CD8-positive, alpha-beta memory T cell (primary cell): ENCODE measurements at regions of chr16 and their contacts with region 1.

Region 1: DNA sequence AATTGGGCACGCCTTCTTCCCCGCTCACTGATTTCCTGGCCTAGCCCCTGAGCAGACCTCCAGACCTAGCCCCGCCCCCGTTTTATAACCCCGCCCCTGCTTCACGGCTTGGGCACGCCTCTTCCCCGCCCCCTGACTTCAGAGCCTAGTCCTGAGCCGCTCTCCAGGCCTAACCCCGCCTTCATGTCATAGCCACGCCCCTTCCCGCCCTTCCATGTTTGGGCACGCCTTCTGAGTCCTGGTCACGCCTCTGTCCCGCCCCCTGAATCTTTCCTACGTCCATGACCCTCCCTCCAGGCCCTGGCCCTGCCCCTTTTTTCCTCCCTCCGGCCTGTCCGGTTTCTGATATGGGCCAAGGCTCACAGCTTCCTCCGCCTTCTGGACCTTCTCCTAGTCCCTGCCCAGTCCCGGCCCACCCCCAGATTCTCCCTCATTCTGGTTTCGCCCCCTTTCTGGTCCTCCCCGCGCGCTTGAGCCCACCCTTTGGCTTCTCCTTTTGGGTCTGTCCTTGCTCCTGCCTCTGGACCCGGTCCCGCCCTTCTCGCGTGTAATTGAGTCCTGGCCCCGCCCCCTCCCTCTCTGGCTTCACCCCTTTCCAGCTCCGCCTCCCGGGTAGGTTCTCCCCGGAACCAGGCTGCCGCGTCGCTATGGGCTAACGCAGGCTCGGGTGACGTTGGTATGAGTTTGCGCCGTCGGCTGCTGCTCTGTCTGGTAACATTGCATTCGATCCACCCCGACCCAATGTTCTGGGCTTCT is 15.1 kb upstream of the EEF2K start:
- DNase-seq: peak; percentile 98 to 100 (median 99)
- H3K4me3 ChIP-seq: peak overlapping the region; percentile 86
- H3K4me3 Mint-ChIP-seq: peak overlapping the region; percentile 87 to 97 (median 94)
- H3K27ac ChIP-seq: peak overlapping the region; percentile 99
- H3K27ac Mint-ChIP-seq: peak overlapping the region; percentile 98 to 100 (median 99)
- H3K4me1 ChIP-seq: peaks cover 70% of the 10 kb centered on the region
- H3K4me1 Mint-ChIP-seq: peaks cover 59 to 82% (median 69%) of the 10 kb centered on the region in 3 donors
- H3K27me3 ChIP-seq: no peaks in the 10 kb centered on the region
- H3K27me3 Mint-ChIP-seq: peaks cover 0 to 17% of the 10 kb centered on the region in 2 donors

Region 2: GRCh38 chr16:22001591-22001990 is 189.4 kb before region 1 on chr16:
- CTCF ChIA-PET with region 1: interaction called, 115 read pairs
- POLR2A ChIA-PET with region 1: interaction called, 19 read pairs
- DNase-seq: no peak
- H3K4me3 ChIP-seq: no peak overlapping the region
- H3K4me3 Mint-ChIP-seq: peak overlapping the region in 4 of 7 donors; percentile 15 to 59 (median 42)
- H3K27ac ChIP-seq: no peak overlapping the region
- H3K27ac Mint-ChIP-seq: peak overlapping the region in 2 of 8 donors; percentile 66 to 90
- H3K4me1 ChIP-seq: peaks cover 8% of the 10 kb centered on the region
- H3K4me1 Mint-ChIP-seq: peaks cover 11 to 15% (median 15%) of the 10 kb centered on the region in 3 donors
- H3K27me3 ChIP-seq: no peaks in the 10 kb centered on the region
- H3K27me3 Mint-ChIP-seq: no peaks in the 10 kb centered on the region

Region 3: DNA sequence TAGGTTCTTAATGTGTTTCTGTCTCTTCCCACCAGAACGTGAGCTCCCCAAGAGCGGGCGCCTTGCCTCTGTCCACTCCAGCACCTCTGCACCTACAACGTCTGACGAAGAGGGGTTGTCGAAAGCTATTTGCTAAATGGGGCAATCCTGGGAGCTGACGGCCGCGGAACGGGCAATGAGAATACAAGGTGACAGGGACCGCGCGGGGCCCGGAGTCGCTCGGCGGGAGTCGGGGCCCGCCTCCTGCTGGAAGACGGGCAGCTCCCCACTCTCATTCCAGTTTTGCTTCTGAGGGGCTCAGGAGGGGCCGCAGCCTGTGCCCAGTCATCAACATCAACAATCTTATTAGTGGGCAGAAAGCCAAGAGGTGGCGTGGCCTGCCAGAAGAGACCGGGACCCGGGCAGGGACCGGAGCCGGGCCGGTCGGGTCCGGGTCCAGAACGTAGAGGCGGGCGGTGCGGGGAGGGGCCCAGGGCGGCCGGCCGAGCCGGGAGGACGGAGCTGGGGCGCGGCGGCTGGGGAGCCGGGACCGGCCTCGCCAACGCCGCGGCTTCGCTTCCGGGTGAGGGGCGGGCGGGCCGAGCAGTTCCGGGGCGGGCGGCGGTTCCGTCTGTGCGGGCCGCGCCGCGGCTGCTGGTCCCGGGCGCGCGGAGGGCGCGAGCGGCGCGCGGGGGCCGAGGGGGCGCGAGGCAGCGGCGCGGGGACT is 183.3 kb before region 1 on chr16 and contains the start of gene MOSMO:
- CTCF ChIA-PET with region 1: interaction called, 115 read pairs
- POLR2A ChIA-PET with region 1: interaction called, 24 read pairs
- DNase-seq: peak; percentile 59 to 71 (median 63)
- H3K4me3 ChIP-seq: peak within 1 kb of the TSS; percentile 36
- H3K4me3 Mint-ChIP-seq: peak within 1 kb of the TSS; percentile 85 to 96 (median 88)
- H3K27ac ChIP-seq: peak within 1 kb of the TSS; percentile 49
- H3K27ac Mint-ChIP-seq: peak within 1 kb of the TSS; percentile 62 to 96 (median 88)
- H3K4me1 ChIP-seq: peaks cover 15% of the 10 kb centered on the region
- H3K4me1 Mint-ChIP-seq: peaks cover 42 to 54% (median 54%) of the 10 kb centered on the region in 3 donors
- H3K27me3 ChIP-seq: no peaks in the 10 kb centered on the region
- H3K27me3 Mint-ChIP-seq: no peaks in the 10 kb centered on the region
- total RNA-seq, gene MOSMO: 9.2 to 11.4 TPM

Region 4: DNA sequence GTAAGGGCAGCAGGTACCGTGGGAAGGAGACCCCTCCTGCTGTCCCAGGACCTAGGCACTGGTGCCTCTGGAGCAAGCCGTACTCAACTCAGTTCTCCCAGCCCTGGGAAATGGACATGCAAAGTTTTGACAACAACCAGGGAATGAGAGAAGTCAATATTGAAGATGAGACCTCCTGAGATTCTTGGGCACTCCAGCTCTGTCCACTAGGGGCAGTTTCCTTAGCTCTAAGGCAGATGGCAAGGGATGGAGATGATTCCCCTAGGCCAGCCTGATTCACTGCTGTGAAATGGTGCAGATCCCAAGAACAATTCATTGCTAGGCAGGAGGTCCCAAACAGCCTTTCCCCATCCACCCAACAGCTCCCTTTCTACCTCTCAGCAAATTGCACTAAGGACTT is 49.2 kb before region 1 on chr16:
- CTCF ChIA-PET with region 1: no interaction called
- POLR2A ChIA-PET with region 1: no interaction called
- DNase-seq: no peak
- H3K4me3 ChIP-seq: no peak overlapping the region
- H3K4me3 Mint-ChIP-seq: no peak overlapping the region
- H3K27ac ChIP-seq: no peak overlapping the region
- H3K27ac Mint-ChIP-seq: no peak overlapping the region
- H3K4me1 ChIP-seq: no peaks in the 10 kb centered on the region
- H3K4me1 Mint-ChIP-seq: no peaks in the 10 kb centered on the region
- H3K27me3 ChIP-seq: no peaks in the 10 kb centered on the region
- H3K27me3 Mint-ChIP-seq: peaks cover 8 to 21% of the 10 kb centered on the region in 2 donors

Region 5: DNA sequence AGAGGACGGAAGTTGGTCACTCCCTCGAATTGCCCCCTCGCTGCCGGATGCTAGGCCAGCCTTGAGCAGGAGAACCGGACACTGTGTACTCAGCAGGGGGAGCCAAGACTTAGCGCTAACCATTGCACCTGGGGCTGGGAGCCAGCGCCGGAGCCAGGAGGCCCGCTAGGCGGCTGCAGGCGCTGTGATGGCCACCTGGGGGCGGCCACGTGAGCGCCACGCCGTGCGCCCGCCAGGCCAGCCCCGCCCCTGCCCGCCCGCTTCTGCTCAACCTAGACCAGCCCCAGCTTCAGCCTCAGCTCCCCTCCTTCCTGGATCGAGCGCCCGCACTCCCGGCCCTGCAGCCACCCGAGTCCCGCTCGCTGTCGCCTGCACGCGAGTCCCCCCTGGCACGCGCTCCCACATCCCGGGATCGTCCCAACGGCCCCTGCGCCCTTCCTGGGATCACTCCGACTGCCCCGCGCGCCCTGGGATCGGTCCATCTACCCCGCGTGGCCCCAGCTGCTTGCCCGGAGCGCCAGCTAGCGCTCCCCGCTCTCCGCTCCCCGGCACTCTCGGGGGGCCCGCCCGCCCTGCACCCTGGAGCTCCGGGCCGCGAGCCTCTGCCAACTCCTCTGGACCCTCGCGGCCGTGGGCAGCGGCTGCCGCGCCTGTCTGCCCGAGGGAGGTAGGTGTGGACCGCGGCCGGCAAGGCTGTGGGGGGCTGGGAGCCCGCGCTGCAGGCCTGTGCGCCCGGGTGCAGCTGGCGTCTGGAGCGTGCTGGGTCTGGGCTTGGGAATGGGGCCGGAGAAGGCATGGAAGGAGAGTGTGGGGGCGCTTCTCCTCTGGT is 15.3 kb after region 1 on chr16 and contains the start of gene EEF2K:
- CTCF ChIA-PET with region 1: interaction called, 15 read pairs
- POLR2A ChIA-PET with region 1: interaction called, 16 read pairs
- DNase-seq: peak; percentile 70 to 85 (median 73)
- H3K4me3 ChIP-seq: peak within 1 kb of the TSS; percentile 65
- H3K4me3 Mint-ChIP-seq: peak within 1 kb of the TSS; percentile 86 to 97 (median 94)
- H3K27ac ChIP-seq: peak within 1 kb of the TSS; percentile 63
- H3K27ac Mint-ChIP-seq: peak within 1 kb of the TSS; percentile 40 to 91 (median 84)
- H3K4me1 ChIP-seq: peaks cover 19% of the 10 kb centered on the region
- H3K4me1 Mint-ChIP-seq: peaks cover 24 to 40% (median 32%) of the 10 kb centered on the region in 3 donors
- H3K27me3 ChIP-seq: no peaks in the 10 kb centered on the region
- H3K27me3 Mint-ChIP-seq: no peaks in the 10 kb centered on the region
- total RNA-seq, gene EEF2K: 27.2 to 28.3 TPM

Region 6: DNA sequence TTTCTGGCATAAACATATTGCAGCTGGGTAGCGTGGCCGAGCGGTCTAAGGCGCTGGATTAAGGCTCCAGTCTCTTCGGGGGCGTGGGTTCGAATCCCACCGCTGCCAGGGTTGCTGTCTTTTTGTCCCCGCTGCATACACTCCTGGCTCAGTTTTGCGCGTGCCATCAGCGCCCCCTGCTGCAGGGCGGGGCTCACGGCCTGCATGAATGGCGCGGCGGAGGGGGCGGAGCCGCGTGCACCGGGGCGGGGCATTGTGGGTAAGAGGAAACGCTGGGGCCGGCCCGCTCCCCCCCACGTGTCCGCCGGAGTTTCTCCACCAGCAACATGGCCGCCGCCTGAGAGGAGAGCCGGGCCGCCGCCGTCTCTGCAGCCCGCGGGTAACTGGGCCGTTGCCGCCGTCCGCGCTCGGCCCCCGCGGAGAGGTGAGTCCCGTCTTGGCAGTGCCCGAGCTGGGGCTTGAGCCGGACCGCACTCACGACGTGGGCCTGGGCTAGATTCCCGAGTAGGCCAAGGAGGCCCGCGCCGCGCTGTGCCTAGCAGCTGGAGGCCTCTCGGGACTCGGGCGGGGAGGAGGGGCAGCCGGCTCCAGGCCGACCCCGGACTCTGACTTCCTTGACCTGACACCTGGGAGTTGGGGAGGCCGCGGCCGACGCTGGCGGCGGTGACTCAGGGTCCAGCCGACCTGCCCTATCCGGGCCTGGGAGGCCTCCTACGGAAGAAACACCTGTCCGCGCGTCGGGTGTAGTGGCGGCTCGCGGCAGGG is 106.3 kb after region 1 on chr16 and contains the start of gene POLR3E:
- CTCF ChIA-PET with region 1: interaction called, 43 read pairs
- POLR2A ChIA-PET with region 1: interaction called, 9 read pairs
- DNase-seq: peak; percentile 100
- H3K4me3 ChIP-seq: peak within 1 kb of the TSS; percentile 81
- H3K4me3 Mint-ChIP-seq: peak within 1 kb of the TSS; percentile 88 to 97 (median 96)
- H3K27ac ChIP-seq: peak within 1 kb of the TSS; percentile 96
- H3K27ac Mint-ChIP-seq: peak within 1 kb of the TSS; percentile 98 to 100 (median 99)
- H3K4me1 ChIP-seq: peaks cover 36% of the 10 kb centered on the region
- H3K4me1 Mint-ChIP-seq: peaks cover 41 to 53% (median 52%) of the 10 kb centered on the region in 3 donors
- H3K27me3 ChIP-seq: no peaks in the 10 kb centered on the region
- H3K27me3 Mint-ChIP-seq: peaks cover 0 to 19% of the 10 kb centered on the region in 2 donors
- total RNA-seq, gene POLR3E: 103 to 116 TPM